Right cardiac atrium (tissue), 5 donors: ENCODE measurements at regions of chr2 and their contacts with region 1.

Region 1: DNA sequence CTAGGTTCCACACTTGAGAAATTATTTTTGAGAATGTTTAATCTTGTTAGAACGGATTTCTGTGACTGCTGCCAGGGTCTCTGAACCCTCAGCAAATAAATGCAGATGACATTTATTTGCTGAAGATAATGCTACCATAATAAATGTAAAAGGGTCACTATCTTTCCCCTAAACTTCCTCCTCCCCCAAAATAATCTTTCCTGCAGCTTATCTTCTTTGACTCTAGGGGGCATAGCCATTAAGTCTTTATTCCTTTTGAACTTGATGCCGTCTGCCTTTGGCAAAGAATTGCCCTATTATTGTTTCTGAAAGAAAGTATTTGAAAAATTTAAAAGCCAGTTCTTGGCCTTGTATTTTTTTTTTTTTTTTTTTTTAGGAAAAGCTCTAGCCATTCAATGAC is 63.6 kb upstream of the ACSL3 start:
- DNase-seq: no peak
- ATAC-seq: no peak
- H3K4me3 ChIP-seq: no peak overlapping the region
- H3K27ac ChIP-seq: no peak overlapping the region
- H3K4me1 ChIP-seq: peaks cover 5% of the 10 kb centered on the region
- H3K27me3 ChIP-seq: no peaks in the 10 kb centered on the region

Region 2: DNA sequence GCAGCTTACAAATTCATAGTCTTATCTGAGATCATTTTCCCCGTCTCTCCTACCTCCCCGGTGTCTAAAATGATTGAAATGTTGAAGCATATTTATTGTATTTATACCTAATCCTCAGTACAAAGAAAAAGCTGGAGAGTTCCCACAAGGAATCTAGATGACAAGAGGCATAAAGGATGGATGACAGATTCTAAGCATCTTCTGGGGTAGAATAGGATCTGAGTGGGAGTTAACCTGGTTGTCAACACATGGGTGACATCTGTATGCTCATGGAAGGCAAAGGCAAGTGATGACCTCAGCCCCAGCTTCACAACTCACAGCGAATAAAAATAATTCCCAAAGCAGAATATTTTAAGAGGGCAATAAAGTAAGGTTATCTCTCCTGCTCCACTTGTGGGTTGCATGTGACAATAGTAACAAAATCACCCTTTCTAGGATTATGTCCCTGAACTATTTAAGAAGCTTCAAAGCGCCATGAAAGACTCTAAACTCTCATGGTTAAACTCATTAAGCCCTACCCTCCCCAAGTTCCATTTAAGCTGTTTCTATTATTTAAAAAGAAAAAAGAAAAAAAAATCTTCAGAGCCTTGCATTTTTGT is 340.7 kb before region 1 on chr2:
- intact Hi-C with region 1: no loop called
- DNase-seq: no peak
- ATAC-seq: no peak
- H3K4me3 ChIP-seq: no peak overlapping the region
- H3K27ac ChIP-seq: no peak overlapping the region
- H3K4me1 ChIP-seq: no peaks in the 10 kb centered on the region
- H3K27me3 ChIP-seq: no peaks in the 10 kb centered on the region

Region 3: GRCh38 chr2:222903234-222904220 is 106.3 kb after region 1 on chr2:
- intact Hi-C with region 1: loop called in 1 of 4 experiments (anchors 10 kb)
- DNase-seq: peak in 1 of 3 donors; percentile 46
- ATAC-seq: peak; percentile 58 to 65
- H3K4me3 ChIP-seq: no peak overlapping the region
- H3K27ac ChIP-seq: no peak overlapping the region
- H3K4me1 ChIP-seq: peaks cover 5% of the 10 kb centered on the region
- H3K27me3 ChIP-seq: no peaks in the 10 kb centered on the region

Region 4: DNA sequence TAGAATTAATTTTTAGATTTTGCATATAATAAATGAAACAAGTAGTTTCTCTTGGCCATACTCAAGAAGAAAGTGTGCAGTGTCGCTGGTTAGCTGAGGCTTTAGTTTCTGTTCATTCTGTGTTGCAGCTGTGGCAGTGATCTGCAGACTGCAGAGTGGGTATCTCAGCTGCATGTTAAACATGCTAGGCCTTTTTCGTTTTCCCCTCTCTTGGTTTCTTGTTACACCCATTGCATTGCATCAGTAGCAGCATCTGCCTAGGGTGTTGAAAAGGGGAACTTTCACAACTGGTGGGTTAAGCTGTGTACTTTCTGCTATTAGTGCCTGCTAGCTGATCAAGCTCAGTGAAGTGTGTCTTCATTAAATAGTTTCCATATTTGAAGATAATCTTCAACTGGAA is 114.9 kb after region 1 on chr2:
- intact Hi-C with region 1: loop called in 2 of 4 experiments (anchors 10 kb)
- DNase-seq: no peak
- ATAC-seq: peak; percentile 53 to 70
- H3K4me3 ChIP-seq: no peak overlapping the region
- H3K27ac ChIP-seq: no peak overlapping the region
- H3K4me1 ChIP-seq: peaks cover 8% of the 10 kb centered on the region
- H3K27me3 ChIP-seq: no peaks in the 10 kb centered on the region